HepG2 (cell line): ENCODE measurements at regions of chr17 and their contacts with region 1.

Region 1: GRCh38 chr17:28717578-28718333 is at the start of gene RAB34:
- DNase-seq: no peak
- ATAC-seq: no peak
- H3K4me3 ChIP-seq: no peak within 1 kb of the TSS
- H3K27ac ChIP-seq: no peak within 1 kb of the TSS
- H3K4me1 ChIP-seq: peaks cover 44% of the 10 kb centered on the region
- H3K27me3 ChIP-seq: peaks cover 2 to 3% of the 10 kb centered on the region in 2 experiments; a peak in 3 of 5 replicates
- CTCF ChIP-seq: no peak
- EP300 ChIP-seq: no peak
- POLR2A ChIP-seq: no peak
- RAD21 ChIP-seq: no peak
- total RNA-seq, gene RAB34: 0.49 TPM in 1 of 2 replicates, not detected in the other

Region 2: DNA sequence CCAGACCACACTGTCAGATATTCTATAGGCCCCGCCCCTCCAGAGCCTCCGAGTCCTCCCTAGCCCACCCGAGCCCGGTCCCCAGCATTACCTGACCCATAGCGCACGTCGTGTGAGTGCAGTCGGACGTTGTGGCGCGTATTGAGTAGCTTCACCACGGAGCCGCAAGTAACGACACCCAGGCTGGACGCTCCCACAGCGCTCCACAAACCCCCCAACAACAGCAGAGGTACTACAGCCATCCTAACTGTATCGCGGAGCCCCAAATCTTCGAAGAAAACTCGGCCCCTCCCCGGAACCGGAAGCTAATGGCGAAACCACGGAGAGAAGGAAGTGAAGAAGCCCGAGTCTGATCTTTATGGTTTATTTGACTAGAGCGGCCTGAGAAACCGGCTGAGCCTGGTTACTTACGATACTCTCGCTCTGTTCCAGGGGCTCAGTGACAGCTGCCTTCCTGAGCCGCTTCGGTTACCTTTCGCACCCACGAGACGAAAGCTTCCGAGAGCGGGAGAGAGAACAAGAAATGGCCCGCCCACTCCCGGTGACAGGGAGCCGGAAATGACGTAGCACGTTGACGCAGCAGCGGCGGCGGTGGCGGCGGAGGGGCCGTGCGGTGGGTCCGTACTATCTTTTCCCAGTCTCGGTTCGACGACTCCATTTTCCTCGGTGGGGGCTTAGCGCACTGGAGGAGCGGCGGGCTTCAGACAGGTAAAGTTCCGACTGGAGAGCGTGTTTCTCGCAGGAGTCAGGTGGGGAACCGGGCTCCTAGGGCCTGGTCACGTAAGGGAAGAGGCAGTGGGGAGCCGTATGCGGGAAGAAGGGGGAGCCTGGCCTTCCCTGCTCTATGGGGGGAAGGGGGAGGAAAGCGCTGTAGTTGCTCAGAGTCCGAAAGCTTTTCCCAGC is 55.9 kb before region 1 on chr17 and contains the starts of genes SDF2 and SUPT6H:
- CTCF ChIA-PET with region 1: no interaction called
- POLR2A ChIA-PET with region 1: interaction called, 42 read pairs
- in situ Hi-C with region 1: no loop called
- intact Hi-C with region 1: no loop called
- DNase-seq: peak; percentile 81
- ATAC-seq: peak; percentile 92
- H3K4me3 ChIP-seq: peak within 1 kb of the TSS; percentile 73 to 91 (median 88)
- H3K27ac ChIP-seq: peak within 1 kb of the TSS; percentile 91
- H3K4me1 ChIP-seq: peaks cover 52% of the 10 kb centered on the region
- H3K27me3 ChIP-seq: no peaks in the 10 kb centered on the region; a peak in 2 of 5 replicates
- CTCF ChIP-seq: no peak
- EP300 ChIP-seq: no peak
- POLR2A ChIP-seq: peak; percentile 73 to 81
- RAD21 ChIP-seq: no peak
- total RNA-seq, gene SDF2: 39.1 and 58.2 TPM in 2 replicates
- total RNA-seq, gene SUPT6H: 39.9 TPM in 2 replicates

Region 3: GRCh38 chr17:28698253-28698941 is 19.4 kb before region 1 on chr17:
- CTCF ChIA-PET with region 1: no interaction called
- POLR2A ChIA-PET with region 1: interaction called, 220 read pairs
- in situ Hi-C with region 1: no loop called
- intact Hi-C with region 1: no loop called
- DNase-seq: peak; percentile 100
- ATAC-seq: peak; percentile 95
- H3K4me3 ChIP-seq: peak overlapping the region in 1 of 3 experiments; percentile 20; a peak in 1 of 6 replicates
- H3K27ac ChIP-seq: peak overlapping the region; percentile 91
- H3K4me1 ChIP-seq: peaks cover 72% of the 10 kb centered on the region
- H3K27me3 ChIP-seq: no peaks in the 10 kb centered on the region
- CTCF ChIP-seq: peak; percentile 46
- EP300 ChIP-seq: peak; percentile 86 to 87; a peak in 3 of 4 replicates
- POLR2A ChIP-seq: peak; percentile 96 to 99
- RAD21 ChIP-seq: peak; percentile 46

Region 4: GRCh38 chr17:28750178-28751047 is 32.7 kb after region 1 on chr17:
- CTCF ChIA-PET with region 1: interaction called, 3 read pairs
- POLR2A ChIA-PET with region 1: interaction called, 92 read pairs
- in situ Hi-C with region 1: no loop called
- intact Hi-C with region 1: no loop called
- DNase-seq: peak; percentile 88
- ATAC-seq: peak; percentile 66
- H3K4me3 ChIP-seq: no peak overlapping the region
- H3K27ac ChIP-seq: peak overlapping the region; percentile 37
- H3K4me1 ChIP-seq: peaks cover 50% of the 10 kb centered on the region
- H3K27me3 ChIP-seq: no peaks in the 10 kb centered on the region
- CTCF ChIP-seq: peak; percentile 98
- EP300 ChIP-seq: no peak
- POLR2A ChIP-seq: peak in 1 of 2 experiments; percentile 43; a peak in 2 of 4 replicates
- RAD21 ChIP-seq: peak; percentile 95

Region 5: DNA sequence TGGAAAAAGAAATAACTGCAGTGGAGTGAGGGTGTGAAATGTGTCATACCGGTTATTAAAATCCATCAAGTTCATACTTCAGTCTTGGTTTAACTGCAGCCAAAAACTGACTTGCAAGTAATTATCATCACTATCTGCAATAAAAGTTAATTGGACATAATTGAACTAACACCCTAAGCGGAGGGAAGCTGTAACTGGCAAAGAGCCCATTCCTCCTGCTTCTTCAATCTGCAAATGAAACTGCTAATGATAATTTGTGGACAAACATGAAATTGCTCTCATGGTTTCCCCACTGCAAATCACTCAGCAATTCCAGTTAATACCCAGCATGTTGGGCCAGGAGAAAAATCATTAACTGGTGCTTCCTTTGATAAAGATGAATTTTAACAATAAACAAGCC is 78.3 kb after region 1 on chr17:
- CTCF ChIA-PET with region 1: no interaction called
- POLR2A ChIA-PET with region 1: no interaction called
- in situ Hi-C with region 1: no loop called
- intact Hi-C with region 1: no loop called
- DNase-seq: no peak
- ATAC-seq: no peak
- H3K4me3 ChIP-seq: no peak overlapping the region
- H3K27ac ChIP-seq: no peak overlapping the region
- H3K4me1 ChIP-seq: no peaks in the 10 kb centered on the region
- H3K27me3 ChIP-seq: no peaks in the 10 kb centered on the region
- CTCF ChIP-seq: no peak
- EP300 ChIP-seq: no peak
- POLR2A ChIP-seq: no peak
- RAD21 ChIP-seq: no peak